ENCODE measurements at regions of chr5 and their contacts with region 1.

Region 1: DNA sequence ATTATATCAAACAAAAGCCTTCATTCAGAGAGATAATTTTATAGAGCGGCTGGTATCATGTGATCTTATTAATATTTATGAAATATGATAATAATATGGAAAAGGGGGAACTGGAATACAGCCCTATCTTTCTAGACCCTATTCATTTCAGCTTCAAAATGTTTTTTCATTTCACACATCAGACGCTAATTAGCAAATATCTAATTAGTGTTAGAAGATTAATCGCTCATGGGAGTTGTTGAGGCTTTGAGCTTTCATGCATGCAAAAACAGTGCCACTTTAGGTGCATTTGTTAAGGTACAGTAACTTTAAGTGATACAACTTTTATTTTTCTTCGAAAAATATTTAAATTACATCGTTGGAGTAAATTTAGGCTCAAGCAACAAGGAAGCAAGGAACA is 751.7 kb upstream of the WWC1 start:
- DNase-seq: no peak

Region 2: GRCh38 chr5:167156446-167156845 is 383.3 kb before region 1 on chr5:
- intact Hi-C with region 1: no loop called
- DNase-seq: no peak

Region 3: DNA sequence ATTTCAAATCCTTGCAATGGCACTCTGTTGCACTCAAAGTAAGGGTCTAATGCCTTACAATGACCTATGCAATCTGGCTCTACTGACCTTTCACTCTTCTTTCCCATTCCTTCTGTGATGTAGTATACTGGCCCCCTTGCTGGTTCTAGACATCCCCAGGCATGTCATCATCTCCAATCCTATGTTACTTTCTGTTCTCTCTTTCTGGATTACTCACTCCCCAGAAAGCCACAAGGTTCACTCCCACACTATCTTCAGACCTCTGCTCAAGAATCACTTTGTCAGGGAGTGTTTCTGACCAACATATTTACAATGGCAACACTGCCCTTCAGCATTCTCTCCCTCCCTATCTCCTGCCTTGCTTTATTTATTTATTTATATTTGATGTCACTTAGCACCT is 50.5 kb before region 1 on chr5:
- intact Hi-C with region 1: no loop called
- DNase-seq: no peak

Region 4: DNA sequence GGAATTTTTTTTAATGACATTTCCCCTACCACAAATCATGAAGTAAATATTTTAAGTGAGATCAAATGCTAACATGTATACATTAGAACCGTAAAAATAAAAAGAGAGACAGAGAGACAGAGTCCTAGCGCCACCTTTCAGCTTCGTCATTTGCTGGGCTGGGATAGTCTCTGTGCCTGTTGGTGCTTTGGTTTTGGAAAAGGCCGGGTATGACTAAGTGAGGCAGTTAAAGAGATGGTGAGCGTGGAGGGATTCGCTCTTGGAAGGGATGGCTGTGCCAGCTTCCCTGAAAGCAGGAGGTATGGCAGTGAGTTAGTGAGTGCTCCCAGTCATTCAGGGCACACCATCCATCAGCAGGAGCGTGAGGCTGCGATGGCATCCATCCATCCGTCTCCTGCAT is 22.0 kb after region 1 on chr5:
- intact Hi-C with region 1: loop called in 1 of 2 experiments (anchors 2 kb)
- DNase-seq: no peak

Region 5: DNA sequence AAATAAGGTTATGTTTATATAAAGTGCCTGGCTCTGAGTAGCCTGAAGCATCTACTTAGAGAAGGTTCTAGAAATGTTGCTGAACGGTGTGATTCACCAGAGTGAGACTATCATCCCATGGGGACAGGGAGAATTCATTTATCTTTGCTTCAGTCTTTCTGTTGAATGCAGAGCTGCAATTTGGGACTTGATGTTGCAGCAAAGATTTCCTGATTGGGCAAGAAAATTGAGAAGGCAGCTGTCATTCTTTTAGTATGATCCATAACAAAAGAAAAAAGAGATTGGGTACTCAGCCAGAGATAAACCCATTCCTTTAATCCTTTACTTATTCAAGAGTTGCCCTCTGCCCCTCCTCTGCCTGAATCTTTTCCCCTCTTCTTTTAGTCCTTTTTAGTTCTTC is 295.4 kb after region 1 on chr5:
- intact Hi-C with region 1: no loop called
- DNase-seq: no peak

Measured in posterior vena cava (tissue), 2 donors.